AG04450 (cell line): ENCODE measurements at regions of chr12 and their contacts with region 1.

Region 1: GRCh38 chr12:14629832-14630710 is 62.4 kb upstream of the PLBD1 start:
- DNase-seq: peak; percentile 21
- H3K4me3 ChIP-seq: no peak overlapping the region
- H3K27ac ChIP-seq: no peak overlapping the region
- H3K27me3 ChIP-seq: no peaks in the 10 kb centered on the region
- CTCF ChIP-seq: peak; percentile 100

Region 2: DNA sequence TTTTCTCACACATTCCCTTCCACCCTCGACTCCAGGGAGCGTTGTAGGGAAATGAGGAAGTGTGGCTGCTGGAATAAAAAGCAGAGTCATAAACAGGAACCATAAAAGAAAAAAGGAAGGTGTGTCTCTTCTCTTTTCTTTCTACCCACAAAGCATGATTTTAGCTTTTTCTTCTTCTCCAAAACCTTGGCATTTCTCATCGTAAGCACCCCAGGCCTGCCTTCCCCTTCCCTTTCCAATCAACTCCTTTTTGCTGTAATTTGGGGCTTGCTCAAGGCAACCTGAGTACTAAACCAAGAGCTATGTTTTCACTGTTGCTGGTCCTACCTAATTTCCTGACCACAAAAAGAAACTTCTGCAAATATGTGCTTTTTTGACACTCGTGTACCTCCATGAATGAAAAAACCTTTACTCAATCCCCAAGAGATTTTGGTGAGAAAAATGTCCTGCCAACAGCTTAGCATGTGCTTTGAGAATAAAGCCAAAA is 71.6 kb before region 1 on chr12:
- CTCF ChIA-PET with region 1: no interaction called
- POLR2A ChIA-PET with region 1: no interaction called
- DNase-seq: no peak
- H3K4me3 ChIP-seq: no peak overlapping the region
- H3K27ac ChIP-seq: no peak overlapping the region
- H3K27me3 ChIP-seq: no peaks in the 10 kb centered on the region
- CTCF ChIP-seq: no peak

Region 3: GRCh38 chr12:14618983-14619382 is 11.1 kb before region 1 on chr12:
- CTCF ChIA-PET with region 1: interaction called, 21 read pairs
- POLR2A ChIA-PET with region 1: no interaction called
- DNase-seq: no peak
- H3K4me3 ChIP-seq: no peak overlapping the region
- H3K27ac ChIP-seq: no peak overlapping the region
- H3K27me3 ChIP-seq: no peaks in the 10 kb centered on the region
- CTCF ChIP-seq: peak; percentile 41

Region 4: DNA sequence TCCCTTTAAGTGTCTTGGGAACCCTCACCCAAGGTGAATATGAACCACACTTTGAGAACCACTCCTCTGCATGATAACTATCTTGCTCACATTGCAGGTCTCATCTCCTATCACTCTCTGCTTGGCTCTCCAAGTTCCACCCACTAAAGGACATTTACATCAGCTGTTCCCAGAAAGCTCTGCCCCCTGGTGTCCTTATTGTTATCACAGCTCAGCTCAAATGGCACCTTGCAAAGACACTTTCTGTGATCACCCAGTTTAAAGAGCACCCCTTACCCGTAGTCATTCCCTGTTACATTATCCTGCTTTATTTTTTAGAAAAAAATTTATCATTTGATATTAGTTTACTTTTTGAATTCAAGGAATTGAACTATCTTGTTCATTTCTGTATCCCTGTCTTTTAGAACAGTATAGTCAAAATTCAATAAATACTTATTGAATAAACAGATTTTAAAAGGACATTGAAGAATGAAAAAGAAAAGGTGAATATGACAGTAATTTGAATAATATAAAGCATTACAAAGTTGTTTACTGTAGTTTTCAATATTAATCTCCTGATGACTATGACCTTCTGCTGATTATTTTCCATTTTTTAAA is 86.9 kb after region 1 on chr12:
- CTCF ChIA-PET with region 1: interaction called, 16 read pairs
- POLR2A ChIA-PET with region 1: no interaction called
- DNase-seq: no peak
- H3K4me3 ChIP-seq: no peak overlapping the region
- H3K27ac ChIP-seq: no peak overlapping the region
- H3K27me3 ChIP-seq: no peaks in the 10 kb centered on the region
- CTCF ChIP-seq: peak; percentile 63